ENCODE measurements at regions of chr22 and their contacts with region 1.

Region 1: DNA sequence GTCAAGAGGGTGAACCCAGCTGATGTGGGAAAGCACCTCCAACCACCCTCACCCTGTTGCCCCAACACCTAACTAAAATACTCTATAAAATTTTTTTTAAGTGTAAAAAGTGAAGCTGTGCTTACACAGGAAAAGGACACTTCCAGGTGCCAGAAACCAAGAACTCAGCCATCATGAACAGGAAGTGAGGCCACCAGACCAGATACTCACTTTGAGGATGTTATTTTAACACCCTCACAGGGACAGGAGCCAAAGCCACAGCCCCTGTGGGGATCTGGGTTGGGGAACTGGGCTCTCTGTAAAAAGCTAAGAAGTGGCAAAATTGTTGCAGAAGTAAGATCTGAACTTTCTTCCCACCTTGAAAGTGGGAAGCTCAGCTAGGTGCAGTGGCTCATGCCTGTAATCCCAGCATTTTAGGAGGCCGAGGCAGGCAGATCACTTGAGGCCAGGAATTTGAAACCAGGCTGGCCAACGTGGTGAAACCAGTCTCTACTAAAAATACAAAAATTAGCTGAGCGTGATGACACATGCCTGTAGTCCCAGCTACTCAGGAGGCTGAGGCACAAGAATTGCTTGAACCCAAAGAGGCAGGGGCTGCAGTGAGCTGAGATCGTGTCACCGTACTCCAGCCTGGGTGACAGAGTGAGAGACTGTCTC is 3.8 kb downstream of the RSPH14 start:
- DNase-seq: peak in 1 of 3 donors; percentile 47
- ATAC-seq: peak; percentile 19
- H3K4me3 ChIP-seq: no peak overlapping the region
- H3K4me1 ChIP-seq: peaks cover 11% of the 10 kb centered on the region
- CTCF ChIP-seq: no peak

Region 2: GRCh38 chr22:23069502-23070357 is 68.3 kb before region 1 on chr22:
- intact Hi-C with region 1: loop called in 1 of 2 experiments (anchors 10 kb)
- DNase-seq: peak; percentile 90 to 94 (median 94)
- ATAC-seq: peak; percentile 98
- H3K4me3 ChIP-seq: no peak overlapping the region
- H3K4me1 ChIP-seq: peaks cover 11% of the 10 kb centered on the region
- CTCF ChIP-seq: no peak

Region 3: DNA sequence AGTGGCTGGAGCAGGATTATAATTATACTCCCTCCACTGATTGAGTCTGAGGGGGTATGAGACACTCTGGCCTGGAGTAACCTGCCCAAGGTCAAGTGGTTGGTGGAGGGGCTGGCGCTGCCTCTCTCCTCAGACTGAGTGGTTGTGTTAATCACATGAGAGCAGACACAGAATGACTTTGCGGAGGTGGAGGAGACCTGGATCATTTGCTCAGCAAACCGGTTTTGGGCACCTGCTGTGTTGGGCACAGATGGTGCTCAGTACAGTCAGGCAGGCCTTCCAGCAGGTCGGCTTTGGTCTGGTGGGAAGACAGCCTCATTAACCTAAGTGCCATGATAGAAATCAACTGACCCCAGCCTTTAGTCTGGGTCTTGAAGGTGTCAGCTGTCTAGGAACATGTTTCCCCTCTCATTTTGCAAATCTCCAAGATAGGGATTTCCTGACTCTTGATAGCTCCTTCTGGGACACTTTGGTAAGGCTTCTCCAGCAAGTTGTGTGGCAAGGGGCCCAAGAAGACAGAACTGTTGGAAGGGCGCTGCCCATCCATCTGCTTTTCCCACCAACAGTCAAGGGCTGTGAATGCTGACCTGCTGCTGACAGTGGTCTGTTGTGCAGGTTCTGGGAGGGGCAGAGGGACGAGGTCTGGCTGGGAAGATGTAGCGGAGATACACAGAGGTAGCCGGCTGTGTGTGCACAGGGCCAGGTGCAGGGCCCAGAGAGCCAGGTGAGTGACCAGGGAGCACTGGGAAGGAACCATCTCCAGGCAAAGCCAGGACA is 54.3 kb after region 1 on chr22:
- intact Hi-C with region 1: no loop called
- DNase-seq: no peak
- ATAC-seq: peak; percentile 34
- H3K4me3 ChIP-seq: no peak overlapping the region
- H3K4me1 ChIP-seq: no peaks in the 10 kb centered on the region
- CTCF ChIP-seq: no peak